ENCODE measurements at regions of chr2 and their contacts with region 1.

Region 1: DNA sequence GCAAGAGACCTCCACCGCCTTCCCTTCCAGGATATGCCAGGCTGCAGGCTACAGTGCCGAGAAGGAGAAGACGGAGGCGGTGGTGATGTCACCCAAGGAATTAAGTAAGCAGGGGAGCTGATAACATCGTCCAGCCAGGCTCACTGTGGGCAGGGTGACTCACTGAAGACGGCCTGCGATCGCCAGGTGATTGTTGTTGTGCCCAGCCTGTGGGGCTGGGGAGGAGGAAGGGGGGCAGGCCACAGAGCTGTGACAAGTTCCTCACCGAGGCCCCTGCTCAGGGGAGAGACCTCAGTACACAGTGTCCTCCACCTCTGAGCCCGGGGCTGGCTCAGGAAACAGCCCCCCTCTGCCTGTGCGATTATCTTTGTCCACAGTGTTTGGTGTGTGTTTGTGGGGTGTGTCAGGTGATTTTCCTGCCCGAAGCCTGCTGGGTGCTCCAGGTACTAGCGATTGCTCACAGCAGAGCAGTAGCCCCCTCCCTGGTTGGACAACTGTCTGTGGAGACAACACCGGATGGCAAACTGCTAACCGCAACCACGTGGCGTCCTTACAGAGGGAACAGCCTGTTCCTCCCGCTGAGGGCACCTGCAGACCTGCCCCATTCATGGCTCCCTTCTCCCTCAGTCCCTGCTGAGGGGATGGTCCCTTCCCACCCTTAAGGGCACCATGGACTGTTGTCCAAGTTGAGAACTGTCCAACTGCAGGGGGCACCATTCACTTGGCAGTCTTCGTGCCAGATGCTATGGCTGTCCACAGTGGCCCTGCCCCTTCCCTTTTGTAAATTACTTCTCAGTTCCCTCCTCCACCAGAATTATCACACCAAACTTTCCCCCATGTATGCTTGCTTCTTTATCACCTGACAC is 95.1 kb downstream of the ZFP36L2 start:
- DNase-seq: no peak
- H3K4me3 ChIP-seq: no peak overlapping the region
- H3K27ac ChIP-seq: no peak overlapping the region
- H3K4me1 ChIP-seq: peaks cover 0 to 14% (median 5%) of the 10 kb centered on the region in 4 experiments; a peak in 3 of 7 replicates
- H3K27me3 ChIP-seq: no peaks in the 10 kb centered on the region
- CTCF ChIP-seq: peak in 2 of 3 experiments; percentile 63 to 65; a peak in 3 of 4 replicates
- EP300 ChIP-seq: no peak
- POLR2A ChIP-seq: no peak
- RAD21 ChIP-seq: peak; percentile 83 to 86

Region 2: DNA sequence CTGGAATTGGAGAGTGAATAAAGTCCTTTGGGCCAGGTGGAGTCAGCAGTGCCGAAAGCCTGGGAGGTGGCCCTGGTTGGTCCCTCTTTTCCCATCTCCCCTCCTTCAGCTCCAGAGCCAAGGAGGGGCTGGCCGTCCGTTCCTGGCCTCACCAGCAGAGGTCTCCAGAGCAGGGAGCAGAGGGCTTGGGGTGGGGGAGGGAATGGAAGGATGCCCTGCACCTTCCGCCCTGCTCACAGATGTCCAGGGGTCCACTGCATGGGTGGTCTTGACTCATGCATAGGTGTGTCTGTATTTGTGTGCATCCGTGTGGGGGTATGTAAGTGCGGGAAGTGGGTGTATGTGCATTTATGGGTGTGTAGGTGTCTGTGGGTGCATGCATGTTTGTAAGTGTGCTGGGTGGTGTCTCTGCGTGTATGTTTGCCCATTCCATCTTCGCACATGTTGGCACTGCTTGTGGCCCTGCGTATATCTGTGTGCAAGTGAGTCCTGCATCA is 106.7 kb before region 1 on chr2:
- CTCF ChIA-PET with region 1: interaction called, 37 read pairs
- POLR2A ChIA-PET with region 1: no interaction called
- DNase-seq: peak; percentile 38 to 89
- H3K4me3 ChIP-seq: no peak overlapping the region
- H3K27ac ChIP-seq: no peak overlapping the region
- H3K4me1 ChIP-seq: peaks cover 2 to 10% (median 3%) of the 10 kb centered on the region in 4 experiments; a peak in 4 of 7 replicates
- H3K27me3 ChIP-seq: no peaks in the 10 kb centered on the region
- CTCF ChIP-seq: peak; percentile 87 to 93 (median 90)
- EP300 ChIP-seq: no peak
- POLR2A ChIP-seq: no peak
- RAD21 ChIP-seq: peak; percentile 88 to 93

Region 3: GRCh38 chr2:43054367-43054766 is 76.9 kb before region 1 on chr2:
- CTCF ChIA-PET with region 1: no interaction called
- POLR2A ChIA-PET with region 1: no interaction called
- DNase-seq: no peak
- H3K4me3 ChIP-seq: no peak overlapping the region
- H3K27ac ChIP-seq: no peak overlapping the region
- H3K4me1 ChIP-seq: peaks cover 7 to 18% (median 11%) of the 10 kb centered on the region in 4 experiments
- H3K27me3 ChIP-seq: no peaks in the 10 kb centered on the region; a peak in 2 of 7 replicates
- CTCF ChIP-seq: no peak
- EP300 ChIP-seq: no peak
- POLR2A ChIP-seq: no peak
- RAD21 ChIP-seq: no peak

Region 4: GRCh38 chr2:43210467-43211303 is 79.4 kb after region 1 on chr2:
- CTCF ChIA-PET with region 1: interaction called, 16 read pairs
- POLR2A ChIA-PET with region 1: no interaction called
- DNase-seq: no peak
- H3K4me3 ChIP-seq: no peak overlapping the region
- H3K27ac ChIP-seq: no peak overlapping the region
- H3K4me1 ChIP-seq: peaks cover 0 to 12% (median 6%) of the 10 kb centered on the region in 4 experiments; a peak in 5 of 7 replicates
- H3K27me3 ChIP-seq: no peaks in the 10 kb centered on the region
- CTCF ChIP-seq: no peak
- EP300 ChIP-seq: no peak
- POLR2A ChIP-seq: no peak
- RAD21 ChIP-seq: no peak

Region 5: DNA sequence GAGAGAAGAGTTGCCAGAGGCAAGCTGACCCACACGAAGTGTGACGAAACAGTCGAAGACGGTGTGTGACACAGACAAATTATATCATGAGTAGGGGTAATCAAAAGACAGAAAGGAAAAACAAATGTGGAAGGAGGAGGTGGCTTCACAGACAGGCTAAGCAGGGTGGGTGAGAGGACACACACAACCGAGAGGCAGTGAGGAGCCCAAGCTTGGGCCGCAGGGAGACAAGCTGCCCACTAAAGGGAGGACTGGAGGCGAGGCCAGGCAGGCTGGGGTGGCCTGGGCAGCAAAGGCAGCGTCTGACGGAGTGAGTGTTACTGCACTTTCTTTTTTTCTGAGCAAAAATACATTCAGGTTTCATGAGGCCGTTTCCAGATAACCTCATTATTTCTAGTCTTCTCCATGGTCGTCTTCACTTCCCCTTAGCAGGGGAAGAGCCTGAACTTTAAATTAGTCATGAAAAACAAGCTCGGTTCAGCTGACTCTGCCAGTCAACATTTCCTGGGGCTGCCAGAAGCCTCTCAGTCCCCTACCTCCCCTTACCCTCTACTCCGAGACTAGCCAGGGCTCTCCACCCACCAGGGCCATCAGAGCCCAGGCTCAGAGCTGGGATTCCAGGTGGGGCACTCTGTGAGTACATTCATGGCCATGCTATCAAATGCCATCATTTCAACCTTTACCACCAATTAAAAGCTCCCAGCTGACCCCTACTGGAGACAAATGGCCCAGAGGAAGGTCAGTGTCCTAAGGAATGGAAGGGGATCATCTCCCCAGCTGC is 108.9 kb after region 1 on chr2:
- CTCF ChIA-PET with region 1: interaction called, 12 read pairs
- POLR2A ChIA-PET with region 1: no interaction called
- DNase-seq: no peak
- H3K4me3 ChIP-seq: no peak overlapping the region
- H3K27ac ChIP-seq: no peak overlapping the region
- H3K4me1 ChIP-seq: no peaks in the 10 kb centered on the region; a peak in 1 of 7 replicates
- H3K27me3 ChIP-seq: no peaks in the 10 kb centered on the region
- CTCF ChIP-seq: peak; percentile 26 to 56 (median 54)
- EP300 ChIP-seq: no peak
- POLR2A ChIP-seq: no peak
- RAD21 ChIP-seq: peak; percentile 48 to 68